Tibial artery (tissue), 4 donors: ENCODE measurements at regions of chr5 and their contacts with region 1.

Region 1: GRCh38 chr5:20224046-20224445 is 236.0 kb upstream of the CDH18 start:
- DNase-seq: no peak
- H3K4me3 ChIP-seq: no peak overlapping the region
- H3K27ac ChIP-seq: no peak overlapping the region
- H3K4me1 ChIP-seq: no peaks in the 10 kb centered on the region
- H3K27me3 ChIP-seq: no peaks in the 10 kb centered on the region
- CTCF ChIP-seq: no peak

Region 2: GRCh38 chr5:19519460-19519859 is 704.6 kb before region 1 on chr5:
- intact Hi-C with region 1: loop called (anchors 5 kb)
- DNase-seq: no peak
- H3K4me3 ChIP-seq: no peak overlapping the region
- H3K27ac ChIP-seq: no peak overlapping the region
- H3K4me1 ChIP-seq: no peaks in the 10 kb centered on the region
- H3K27me3 ChIP-seq: no peaks in the 10 kb centered on the region
- CTCF ChIP-seq: no peak